ENCODE measurements at regions of chr17 and their contacts with region 1.

Region 1: DNA sequence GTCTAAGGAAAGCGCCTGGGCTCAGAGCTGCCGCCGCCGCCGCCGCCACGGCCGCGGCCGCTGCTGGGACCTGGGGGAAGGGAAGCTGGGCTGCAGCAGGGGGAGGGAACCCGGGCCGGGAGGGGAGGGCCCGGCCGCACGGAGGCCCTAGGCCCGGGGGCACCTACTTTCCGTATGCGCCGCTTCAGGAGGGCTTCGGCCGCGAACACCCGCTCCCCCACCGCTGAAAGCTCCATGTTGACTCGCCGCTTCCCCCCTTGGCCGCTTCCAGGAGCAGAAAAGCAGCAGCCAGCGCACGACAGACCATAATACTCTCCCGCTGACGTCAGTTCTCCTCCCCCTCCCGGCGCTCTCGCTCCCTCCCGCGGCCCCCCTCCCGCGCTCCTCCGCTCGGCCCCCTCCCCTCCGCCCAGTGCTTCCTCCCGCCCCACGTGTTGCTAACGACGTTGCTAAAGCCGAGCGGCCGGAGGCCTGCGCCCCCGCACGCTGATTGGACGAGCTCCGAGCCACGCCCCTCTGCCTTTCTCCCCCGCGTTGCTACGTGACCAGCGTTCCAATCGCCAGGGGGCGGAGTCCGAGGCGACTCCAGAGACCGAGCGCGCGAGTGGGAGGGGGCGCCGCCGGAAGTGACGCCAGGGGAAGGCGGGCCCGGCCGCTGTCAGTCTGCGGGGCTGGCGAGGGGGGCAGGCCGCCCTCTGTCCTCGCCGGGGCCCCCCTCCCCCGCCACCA is at the start of gene CBX8:
- DNase-seq: peak; percentile 100
- ATAC-seq: peak; percentile 77
- H3K4me3 ChIP-seq: peak within 1 kb of the TSS; percentile 80 to 92
- H3K27ac ChIP-seq: peak within 1 kb of the TSS; percentile 90
- H3K4me1 ChIP-seq: peaks cover 41 to 62% of the 10 kb centered on the region in 2 experiments
- H3K27me3 ChIP-seq: no peaks in the 10 kb centered on the region
- CTCF ChIP-seq: no peak
- POLR2A ChIP-seq: peak; percentile 72
- RAD21 ChIP-seq: no peak
- total RNA-seq, gene CBX8: 29.0 TPM

Region 2: DNA sequence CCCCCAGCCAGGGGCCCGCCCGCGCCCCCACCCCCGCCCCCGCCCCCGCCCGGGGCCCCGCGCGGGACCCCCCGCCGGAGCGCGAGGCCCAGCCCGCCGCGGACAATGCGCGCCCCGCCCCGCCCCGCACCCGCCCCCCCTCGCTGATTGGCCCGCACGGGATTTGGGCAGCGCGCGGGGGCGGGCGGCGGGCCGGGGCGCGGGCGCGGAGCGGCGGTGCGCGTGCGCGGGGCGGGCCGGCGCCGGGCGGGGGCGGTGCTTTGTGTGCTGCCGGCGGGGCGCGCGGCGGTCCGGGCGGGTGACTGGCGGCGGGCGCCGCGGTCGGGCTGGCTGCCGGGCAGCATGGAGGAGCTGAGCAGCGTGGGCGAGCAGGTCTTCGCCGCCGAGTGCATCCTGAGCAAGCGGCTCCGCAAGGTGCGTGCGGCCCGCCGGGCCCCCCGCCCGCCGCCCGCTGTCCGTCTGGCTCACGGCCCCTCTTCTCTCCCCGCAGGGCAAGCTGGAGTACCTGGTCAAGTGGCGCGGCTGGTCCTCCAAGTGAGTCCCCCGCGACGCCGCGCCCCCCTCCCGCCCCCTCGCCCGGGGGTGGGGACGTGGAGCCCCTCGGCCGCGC is 18.9 kb before region 1 on chr17 and contains the start of gene CBX2:
- CTCF ChIA-PET with region 1: no interaction called
- POLR2A ChIA-PET with region 1: interaction called, 7 read pairs
- RAD21 ChIA-PET with region 1: no interaction called
- intact Hi-C with region 1: loop called (anchors 1 kb)
- DNase-seq: peak; percentile 32
- ATAC-seq: peak; percentile 90
- H3K4me3 ChIP-seq: peak within 1 kb of the TSS; percentile 70 to 79
- H3K27ac ChIP-seq: peak within 1 kb of the TSS; percentile 64; the same call in 1 of the 2 replicates
- H3K4me1 ChIP-seq: peaks cover 12 to 19% of the 10 kb centered on the region in 2 experiments
- H3K27me3 ChIP-seq: peaks cover 34% of the 10 kb centered on the region
- CTCF ChIP-seq: no peak
- POLR2A ChIP-seq: no peak
- RAD21 ChIP-seq: no peak
- total RNA-seq, gene CBX2: 28.3 TPM

Measured in HCT116 (cell line).